ENCODE measurements at regions of chr13 and their contacts with region 1.

Region 1: DNA sequence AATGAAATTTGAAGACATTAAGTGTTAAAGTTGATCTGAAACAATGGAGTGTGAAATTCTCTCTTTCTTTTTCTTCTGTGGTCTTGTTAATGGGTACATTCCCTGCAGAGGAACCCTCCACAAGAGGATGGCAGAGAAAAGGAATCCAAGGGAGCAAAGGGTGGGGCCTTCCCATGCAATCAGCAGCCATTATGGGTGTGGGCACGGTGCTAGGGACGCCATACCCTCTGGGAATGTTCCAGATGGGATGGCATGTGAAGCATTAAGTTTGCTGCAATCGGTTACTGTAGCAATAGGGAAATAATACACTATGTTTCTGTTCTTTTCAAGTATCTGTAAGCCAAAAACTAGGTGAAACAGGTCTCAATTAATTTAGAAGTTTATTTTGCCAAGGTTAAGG is 1246.3 kb upstream of the PCDH9 start:
- DNase-seq: no peak
- H3K4me3 ChIP-seq: no peak overlapping the region
- H3K27ac ChIP-seq: no peak overlapping the region
- H3K4me1 ChIP-seq: no peaks in the 10 kb centered on the region
- H3K27me3 ChIP-seq: no peaks in the 10 kb centered on the region
- CTCF ChIP-seq: no peak
- EP300 ChIP-seq: no peak
- POLR2A ChIP-seq: no peak

Region 2: GRCh38 chr13:67048084-67048820 is 1428.2 kb before region 1 on chr13:
- in situ Hi-C with region 1: no loop called
- intact Hi-C with region 1: loop called (anchors 10 kb)
- DNase-seq: no peak
- H3K4me3 ChIP-seq: no peak overlapping the region
- H3K27ac ChIP-seq: no peak overlapping the region
- H3K4me1 ChIP-seq: no peaks in the 10 kb centered on the region
- H3K27me3 ChIP-seq: no peaks in the 10 kb centered on the region
- CTCF ChIP-seq: no peak
- EP300 ChIP-seq: no peak
- POLR2A ChIP-seq: no peak

Region 3: DNA sequence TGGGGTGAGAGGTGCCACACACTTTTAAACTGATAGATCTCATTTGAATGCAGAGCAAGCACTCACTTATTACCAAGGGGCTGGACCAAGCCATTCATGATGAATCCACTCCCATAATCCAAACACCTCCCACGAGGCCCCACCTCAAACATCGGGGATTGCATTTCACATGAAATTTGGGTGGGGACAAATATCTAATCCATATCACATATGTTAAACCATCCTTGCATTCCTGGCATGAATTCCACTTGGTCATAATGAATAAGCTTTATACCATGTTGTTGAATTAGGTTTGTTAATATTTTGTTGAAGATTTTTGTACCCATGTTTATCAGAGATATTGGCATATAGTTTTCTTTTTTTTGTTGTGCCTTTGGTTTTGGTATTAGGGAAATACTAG is 432.4 kb after region 1 on chr13:
- in situ Hi-C with region 1: no loop called
- intact Hi-C with region 1: no loop called
- DNase-seq: no peak
- H3K4me3 ChIP-seq: no peak overlapping the region
- H3K27ac ChIP-seq: no peak overlapping the region
- H3K4me1 ChIP-seq: no peaks in the 10 kb centered on the region
- H3K27me3 ChIP-seq: no peaks in the 10 kb centered on the region
- CTCF ChIP-seq: no peak
- EP300 ChIP-seq: no peak
- POLR2A ChIP-seq: no peak

Measured in transverse colon (tissue), 4 donors.